Activated T-helper 2 cell treated with anti-CD3 and anti-CD28 coated beads, Interferon-gamma antibody, Interleukin-2, Interleukin-4, amounts not matched to agents 10 μg/mL and 5 μg/mL and 100 μg/mL, durations not matched to agents 14 hours and 24 hours and 36 hours (primary cell): ENCODE measurements at regions of chr5 and their contacts with region 1.

Region 1: DNA sequence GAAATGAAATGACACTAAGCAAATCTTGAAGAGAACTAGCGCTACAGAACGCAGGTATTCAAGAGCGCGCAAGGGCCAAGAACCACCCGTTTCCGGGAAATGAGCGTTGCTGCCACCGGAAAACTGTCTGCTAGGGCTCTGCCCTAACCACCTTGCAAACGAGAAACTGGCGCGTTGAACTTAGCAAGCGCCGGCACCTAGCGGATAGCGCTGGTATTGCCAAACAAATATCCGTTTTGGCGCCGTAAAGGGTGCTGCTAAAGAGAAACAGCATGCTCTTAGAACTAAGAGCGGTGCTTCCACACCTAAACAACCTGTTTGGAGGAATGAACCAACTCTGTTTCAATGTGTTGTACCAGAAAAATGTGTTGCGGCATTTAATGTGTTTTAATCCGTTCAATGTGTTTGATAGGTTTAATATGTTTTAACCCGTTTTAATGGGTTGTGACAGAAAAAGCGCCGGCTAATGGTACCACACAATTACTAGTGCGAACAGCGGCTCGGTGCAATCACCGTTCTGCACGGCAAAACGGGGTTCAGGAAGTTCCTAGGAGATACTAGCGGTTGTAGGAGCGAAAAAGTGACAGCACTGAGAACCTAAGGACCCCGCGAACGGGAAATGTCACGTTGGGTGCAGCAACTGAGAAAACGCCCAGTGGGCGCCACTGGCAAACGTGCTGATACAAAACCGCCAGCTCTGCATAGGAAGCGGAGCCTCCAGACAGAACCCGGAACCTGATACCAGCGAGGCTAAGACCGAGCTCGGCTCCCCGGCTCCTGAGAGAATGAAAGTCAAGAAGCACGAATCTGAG is at the start of gene ANXA2R:
- DNase-seq: peak; percentile 95
- H3K4me3 Mint-ChIP-seq: peak within 1 kb of the TSS; percentile 92
- H3K27ac Mint-ChIP-seq: peak within 1 kb of the TSS; percentile 97
- H3K4me1 Mint-ChIP-seq: peaks cover 47% of the 10 kb centered on the region
- H3K27me3 Mint-ChIP-seq: no peaks in the 10 kb centered on the region
- total RNA-seq, gene ANXA2R: 2.1 and 2.5 TPM in 2 replicates

Region 2: GRCh38 chr5:42908509-42909488 is 131.7 kb before region 1 on chr5:
- intact Hi-C with region 1: loop called (anchors 1 kb)
- DNase-seq: peak; percentile 86
- H3K4me3 Mint-ChIP-seq: peak overlapping the region; percentile 77
- H3K27ac Mint-ChIP-seq: peak overlapping the region; percentile 14
- H3K4me1 Mint-ChIP-seq: peaks cover 16% of the 10 kb centered on the region
- H3K27me3 Mint-ChIP-seq: peaks cover 31% of the 10 kb centered on the region

Region 3: DNA sequence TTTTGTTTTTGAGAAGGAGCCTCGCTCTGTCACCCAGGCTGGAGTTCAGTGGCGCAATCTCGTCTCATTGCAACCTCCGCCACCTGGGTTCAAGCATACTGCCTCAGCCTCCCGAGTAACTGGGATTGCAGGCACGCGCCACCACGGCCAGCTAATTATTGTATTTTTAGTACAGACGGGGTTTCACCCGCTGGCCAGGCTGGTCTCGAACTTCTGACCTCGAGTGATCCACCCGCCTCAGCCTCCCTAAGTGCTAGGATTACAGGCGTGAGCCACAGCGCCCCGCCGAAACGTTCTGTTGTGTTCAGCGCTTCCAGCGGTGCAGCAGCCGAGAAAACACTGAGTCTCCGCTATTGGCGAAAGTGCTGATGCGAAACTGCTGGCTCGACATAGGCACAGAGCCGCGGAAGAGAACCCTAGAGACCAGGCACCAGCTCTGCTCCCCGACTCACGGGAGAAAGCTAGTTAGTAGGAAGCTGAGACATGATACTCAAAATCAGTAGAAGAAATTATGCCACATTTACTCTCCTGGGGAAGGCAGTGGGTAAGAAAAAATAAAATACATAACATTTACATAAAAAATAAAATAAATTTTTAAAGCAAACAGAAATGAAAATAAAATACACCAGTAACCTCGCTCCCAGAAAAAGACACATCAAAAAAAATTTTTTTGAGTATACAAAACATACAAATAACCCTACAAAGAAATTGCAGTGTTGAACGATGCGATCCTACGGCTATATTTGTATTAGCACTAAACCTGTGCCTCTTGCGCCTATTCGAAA is 31.9 kb before region 1 on chr5:
- intact Hi-C with region 1: loop called (anchors 1 kb)
- DNase-seq: peak; percentile 88
- H3K4me3 Mint-ChIP-seq: peak overlapping the region; percentile 85
- H3K27ac Mint-ChIP-seq: peak overlapping the region; percentile 95
- H3K4me1 Mint-ChIP-seq: peaks cover 24% of the 10 kb centered on the region
- H3K27me3 Mint-ChIP-seq: no peaks in the 10 kb centered on the region